Prostate gland (tissue), 2 donors: ENCODE measurements at regions of chr1 and their contacts with region 1.

Region 1: GRCh38 chr1:154747740-154748404 is 122.2 kb downstream of the KCNN3 start:
- DNase-seq: no peak
- H3K4me3 ChIP-seq: no peak overlapping the region
- H3K27ac ChIP-seq: no peak overlapping the region
- H3K4me1 ChIP-seq: no peaks in the 10 kb centered on the region
- H3K27me3 ChIP-seq: no peaks in the 10 kb centered on the region
- CTCF ChIP-seq: no peak
- POLR2A ChIP-seq: no peak

Region 2: GRCh38 chr1:154819628-154820590 is 72.0 kb after region 1 on chr1:
- intact Hi-C with region 1: loop called (anchors 5 kb)
- DNase-seq: no peak
- H3K4me3 ChIP-seq: no peak overlapping the region
- H3K27ac ChIP-seq: no peak overlapping the region
- H3K4me1 ChIP-seq: no peaks in the 10 kb centered on the region
- H3K27me3 ChIP-seq: no peaks in the 10 kb centered on the region
- CTCF ChIP-seq: peak in 1 of 4 experiments; percentile 32
- POLR2A ChIP-seq: no peak

Region 3: DNA sequence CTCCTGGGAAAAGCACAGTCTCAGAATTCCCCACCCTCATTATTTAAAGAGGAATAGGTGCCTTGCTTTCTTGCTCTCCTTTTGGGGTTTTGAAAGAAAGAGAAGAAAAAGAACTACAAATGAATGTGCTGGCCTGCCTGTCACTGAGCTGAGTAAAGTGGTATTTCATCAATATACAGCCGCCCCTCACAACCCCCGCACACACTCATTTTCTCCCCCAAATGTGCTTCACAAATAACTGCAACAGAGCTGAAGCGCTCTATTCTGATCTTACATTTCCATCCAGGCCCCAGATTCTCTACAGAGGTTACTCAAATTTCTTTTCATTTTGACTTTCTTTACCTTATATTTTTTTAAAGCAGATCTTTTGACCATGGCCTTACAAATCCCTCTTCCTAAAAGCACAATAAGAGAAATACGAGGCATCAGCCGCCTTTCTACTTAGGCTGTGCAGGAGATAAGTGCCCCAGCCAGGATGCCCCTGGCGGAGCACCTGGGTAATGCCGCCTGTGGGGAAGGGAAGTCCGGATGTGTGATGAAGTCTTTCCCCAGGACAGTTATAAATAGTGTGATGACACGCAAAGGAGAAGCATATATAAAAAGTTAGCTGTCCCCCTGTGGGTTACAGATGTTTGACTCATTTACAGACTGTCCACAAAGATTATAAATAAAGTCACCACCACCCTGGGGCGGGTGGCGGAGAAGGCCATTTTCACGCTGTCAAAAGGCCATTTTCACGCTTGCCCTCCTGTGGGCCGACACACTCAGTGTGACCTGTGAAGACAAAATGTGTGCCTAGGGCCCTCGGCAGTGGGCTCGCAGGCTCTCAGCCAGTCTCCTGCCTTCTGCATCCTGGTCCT is 115.7 kb after region 1 on chr1:
- intact Hi-C with region 1: loop called (anchors 10 kb)
- DNase-seq: no peak
- H3K4me3 ChIP-seq: no peak overlapping the region
- H3K27ac ChIP-seq: no peak overlapping the region
- H3K4me1 ChIP-seq: no peaks in the 10 kb centered on the region
- H3K27me3 ChIP-seq: no peaks in the 10 kb centered on the region
- CTCF ChIP-seq: peak in 2 of 4 experiments; percentile 8 to 20
- POLR2A ChIP-seq: no peak

Region 4: GRCh38 chr1:154936555-154937084 is 188.7 kb after region 1 on chr1 and contains the start of gene PMVK:
- intact Hi-C with region 1: no loop called
- DNase-seq: peak; percentile 96
- H3K4me3 ChIP-seq: peak within 1 kb of the TSS; percentile 66 to 69
- H3K27ac ChIP-seq: peak within 1 kb of the TSS; percentile 99
- H3K4me1 ChIP-seq: peaks cover 19% of the 10 kb centered on the region
- H3K27me3 ChIP-seq: no peaks in the 10 kb centered on the region
- CTCF ChIP-seq: peak in 3 of 4 experiments; percentile 31 to 63 (median 57)
- POLR2A ChIP-seq: peak; percentile 70
- total RNA-seq, gene PMVK: 23.2 to 26.2 TPM